ENCODE measurements at regions of chr16 and their contacts with region 1.

Region 1: GRCh38 chr16:88967830-88968588 is 9.0 kb downstream of the CBFA2T3 start:
- DNase-seq: peak; percentile 93
- ATAC-seq: peak; percentile 74
- H3K4me3 ChIP-seq: peak overlapping the region in 4 of 5 experiments; percentile 13 to 53 (median 34)
- H3K4me3 Mint-ChIP-seq: peak overlapping the region; percentile 85
- H3K27ac ChIP-seq: peak overlapping the region; percentile 77 to 91
- H3K27ac Mint-ChIP-seq: peak overlapping the region; percentile 94
- H3K4me1 ChIP-seq: peaks cover 76 to 79% of the 10 kb centered on the region in 2 donors
- H3K4me1 Mint-ChIP-seq: peaks cover 82% of the 10 kb centered on the region
- H3K27me3 ChIP-seq: no peaks in the 10 kb centered on the region
- H3K27me3 Mint-ChIP-seq: no peaks in the 10 kb centered on the region
- CTCF ChIP-seq: no peak

Region 2: DNA sequence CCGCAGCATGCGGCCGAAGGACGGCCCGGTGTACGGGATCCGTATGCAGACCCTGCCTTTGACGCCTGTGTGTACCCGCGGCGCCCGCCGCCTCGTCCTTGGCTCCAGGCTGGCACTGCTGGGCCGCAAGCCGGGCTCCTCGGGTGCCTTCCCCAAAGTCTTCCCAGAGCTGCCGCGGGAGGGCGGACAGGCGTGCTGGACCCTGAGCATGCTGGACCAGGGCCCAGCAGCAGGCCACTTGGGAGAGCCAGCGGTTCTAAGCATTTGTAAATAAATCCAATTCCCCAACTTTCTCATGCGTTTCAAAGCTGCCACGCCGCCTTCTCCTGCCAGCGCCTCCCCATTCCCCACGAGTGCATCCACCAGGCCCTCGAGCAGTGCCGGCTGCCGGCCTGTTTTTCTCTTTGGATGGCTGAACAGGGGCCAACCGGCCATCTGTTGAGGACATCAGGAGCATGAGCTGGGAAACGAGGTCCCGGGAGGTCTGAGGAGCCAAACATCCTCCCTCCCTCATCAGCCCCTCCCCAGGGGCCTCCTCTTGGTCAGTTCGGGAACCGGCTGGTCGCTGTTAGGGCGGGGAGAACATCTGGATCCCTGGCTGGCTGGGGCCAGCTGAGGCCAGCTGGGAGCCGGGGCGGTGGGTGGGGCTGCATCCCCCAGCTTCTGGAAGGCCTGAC is 81.0 kb before region 1 on chr16:
- CTCF ChIA-PET with region 1: no interaction called
- POLR2A ChIA-PET with region 1: no interaction called
- intact Hi-C with region 1: no loop called
- DNase-seq: no peak
- ATAC-seq: no peak
- H3K4me3 ChIP-seq: no peak overlapping the region
- H3K4me3 Mint-ChIP-seq: no peak overlapping the region
- H3K27ac ChIP-seq: no peak overlapping the region
- H3K27ac Mint-ChIP-seq: no peak overlapping the region
- H3K4me1 ChIP-seq: peaks cover 0 to 6% of the 10 kb centered on the region in 2 donors
- H3K4me1 Mint-ChIP-seq: peaks cover 6% of the 10 kb centered on the region
- H3K27me3 ChIP-seq: no peaks in the 10 kb centered on the region
- H3K27me3 Mint-ChIP-seq: no peaks in the 10 kb centered on the region
- CTCF ChIP-seq: no peak

Region 3: GRCh38 chr16:88941913-88942909 is 25.8 kb before region 1 on chr16:
- CTCF ChIA-PET with region 1: interaction called, 5 read pairs
- POLR2A ChIA-PET with region 1: interaction called, 5 read pairs
- intact Hi-C with region 1: loop called (anchors 1 kb)
- DNase-seq: peak; percentile 85
- ATAC-seq: peak; percentile 67
- H3K4me3 ChIP-seq: peak overlapping the region in 4 of 5 experiments; percentile 22 to 46 (median 30)
- H3K4me3 Mint-ChIP-seq: peak overlapping the region; percentile 78
- H3K27ac ChIP-seq: no peak overlapping the region
- H3K27ac Mint-ChIP-seq: peak overlapping the region; percentile 81
- H3K4me1 ChIP-seq: peaks cover 29 to 39% of the 10 kb centered on the region in 2 donors
- H3K4me1 Mint-ChIP-seq: peaks cover 44% of the 10 kb centered on the region
- H3K27me3 ChIP-seq: no peaks in the 10 kb centered on the region
- H3K27me3 Mint-ChIP-seq: no peaks in the 10 kb centered on the region
- CTCF ChIP-seq: peak; percentile 86

Region 4: GRCh38 chr16:88983771-88984687 is 16.0 kb after region 1 on chr16:
- CTCF ChIA-PET with region 1: interaction called, 10 read pairs
- POLR2A ChIA-PET with region 1: interaction called, 53 read pairs
- intact Hi-C with region 1: loop called (anchors 1 kb)
- DNase-seq: peak; percentile 73
- ATAC-seq: peak; percentile 77
- H3K4me3 ChIP-seq: peak overlapping the region in 4 of 5 experiments; percentile 11 to 47 (median 28)
- H3K4me3 Mint-ChIP-seq: peak overlapping the region; percentile 84
- H3K27ac ChIP-seq: peak overlapping the region; percentile 28 to 59
- H3K27ac Mint-ChIP-seq: peak overlapping the region; percentile 90
- H3K4me1 ChIP-seq: peaks cover 63 to 67% of the 10 kb centered on the region in 2 donors
- H3K4me1 Mint-ChIP-seq: peaks cover 65% of the 10 kb centered on the region
- H3K27me3 ChIP-seq: no peaks in the 10 kb centered on the region
- H3K27me3 Mint-ChIP-seq: no peaks in the 10 kb centered on the region
- CTCF ChIP-seq: no peak

Region 5: GRCh38 chr16:89018282-89019158 is 50.5 kb after region 1 on chr16:
- CTCF ChIA-PET with region 1: no interaction called
- POLR2A ChIA-PET with region 1: no interaction called
- intact Hi-C with region 1: no loop called
- DNase-seq: no peak
- ATAC-seq: no peak
- H3K4me3 ChIP-seq: no peak overlapping the region
- H3K4me3 Mint-ChIP-seq: no peak overlapping the region
- H3K27ac ChIP-seq: no peak overlapping the region
- H3K27ac Mint-ChIP-seq: no peak overlapping the region
- H3K4me1 ChIP-seq: no peaks in the 10 kb centered on the region
- H3K4me1 Mint-ChIP-seq: no peaks in the 10 kb centered on the region
- H3K27me3 ChIP-seq: peaks cover 0 to 17% (median 6%) of the 10 kb centered on the region in 4 experiments
- H3K27me3 Mint-ChIP-seq: peaks cover 17% of the 10 kb centered on the region
- CTCF ChIP-seq: no peak

Region 6: GRCh38 chr16:89031715-89032659 is 64.0 kb after region 1 on chr16:
- CTCF ChIA-PET with region 1: no interaction called
- POLR2A ChIA-PET with region 1: interaction called, 6 read pairs
- intact Hi-C with region 1: loop called (anchors 1 kb)
- DNase-seq: peak; percentile 91
- ATAC-seq: peak; percentile 98
- H3K4me3 ChIP-seq: peak overlapping the region; percentile 6 to 51 (median 25)
- H3K4me3 Mint-ChIP-seq: peak overlapping the region; percentile 56
- H3K27ac ChIP-seq: peak overlapping the region; percentile 35 to 68
- H3K27ac Mint-ChIP-seq: peak overlapping the region; percentile 69
- H3K4me1 ChIP-seq: peaks cover 19 to 26% of the 10 kb centered on the region in 2 donors
- H3K4me1 Mint-ChIP-seq: peaks cover 35% of the 10 kb centered on the region
- H3K27me3 ChIP-seq: no peaks in the 10 kb centered on the region
- H3K27me3 Mint-ChIP-seq: no peaks in the 10 kb centered on the region
- CTCF ChIP-seq: no peak

Region 7: GRCh38 chr16:89099905-89100304 is 131.9 kb after region 1 on chr16:
- CTCF ChIA-PET with region 1: interaction called, 3 read pairs
- POLR2A ChIA-PET with region 1: interaction called, 5 read pairs
- intact Hi-C with region 1: loop called (anchors 1 kb)
- DNase-seq: no peak
- ATAC-seq: no peak
- H3K4me3 ChIP-seq: no peak overlapping the region
- H3K4me3 Mint-ChIP-seq: no peak overlapping the region
- H3K27ac ChIP-seq: no peak overlapping the region
- H3K27ac Mint-ChIP-seq: peak overlapping the region; percentile 59
- H3K4me1 ChIP-seq: peaks cover 47 to 53% of the 10 kb centered on the region in 2 donors
- H3K4me1 Mint-ChIP-seq: peaks cover 51% of the 10 kb centered on the region
- H3K27me3 ChIP-seq: no peaks in the 10 kb centered on the region
- H3K27me3 Mint-ChIP-seq: no peaks in the 10 kb centered on the region
- CTCF ChIP-seq: no peak